Stomach (tissue), 19 donors: ENCODE measurements at regions of chr18 and their contacts with region 1.

Region 1: GRCh38 chr18:31555971-31556747 is 35.5 kb upstream of the TTR start:
- DNase-seq: peak in 1 of 2 donors; percentile 88
- H3K4me3 ChIP-seq: no peak overlapping the region
- H3K27ac ChIP-seq: no peak overlapping the region
- H3K4me1 ChIP-seq: peaks cover 0 to 12% (median 1%) of the 10 kb centered on the region in 4 donors
- H3K27me3 ChIP-seq: peaks cover 0 to 8% (median 0%) of the 10 kb centered on the region in 3 donors
- CTCF ChIP-seq: peak in 5 of 7 experiments; percentile 66 to 92 (median 79)
- EP300 ChIP-seq: no peak
- POLR2A ChIP-seq: no peak

Region 2: GRCh38 chr18:31722369-31722957 is 166.3 kb after region 1 on chr18:
- intact Hi-C with region 1: loop called (anchors 5 kb)
- DNase-seq: peak; percentile 89 to 91
- H3K4me3 ChIP-seq: no peak overlapping the region
- H3K27ac ChIP-seq: no peak overlapping the region
- H3K4me1 ChIP-seq: peaks cover 0 to 19% (median 18%) of the 10 kb centered on the region in 4 donors
- H3K27me3 ChIP-seq: peaks cover 0 to 7% (median 0%) of the 10 kb centered on the region in 3 donors
- CTCF ChIP-seq: peak in 5 of 7 experiments; percentile 71 to 87 (median 77)
- EP300 ChIP-seq: no peak
- POLR2A ChIP-seq: no peak

Region 3: GRCh38 chr18:31819106-31819924 is 263.2 kb after region 1 on chr18:
- intact Hi-C with region 1: loop called (anchors 5 kb)
- DNase-seq: peak in 1 of 2 donors; percentile 77
- H3K4me3 ChIP-seq: no peak overlapping the region
- H3K27ac ChIP-seq: no peak overlapping the region
- H3K4me1 ChIP-seq: peaks cover 0 to 8% (median 0%) of the 10 kb centered on the region in 4 donors
- H3K27me3 ChIP-seq: no peaks in the 10 kb centered on the region
- CTCF ChIP-seq: peak in 4 of 7 experiments; percentile 33 to 65 (median 58)
- EP300 ChIP-seq: no peak
- POLR2A ChIP-seq: no peak